Ascending aorta (tissue), 2 donors: ENCODE measurements at regions of chr3 and their contacts with region 1.

Region 1: GRCh38 chr3:190205739-190206138 is 85.0 kb upstream of the P3H2 start:
- DNase-seq: no peak
- H3K4me3 ChIP-seq: no peak overlapping the region
- H3K27ac ChIP-seq: no peak overlapping the region
- H3K4me1 ChIP-seq: no peaks in the 10 kb centered on the region
- H3K27me3 ChIP-seq: no peaks in the 10 kb centered on the region
- CTCF ChIP-seq: no peak

Region 2: DNA sequence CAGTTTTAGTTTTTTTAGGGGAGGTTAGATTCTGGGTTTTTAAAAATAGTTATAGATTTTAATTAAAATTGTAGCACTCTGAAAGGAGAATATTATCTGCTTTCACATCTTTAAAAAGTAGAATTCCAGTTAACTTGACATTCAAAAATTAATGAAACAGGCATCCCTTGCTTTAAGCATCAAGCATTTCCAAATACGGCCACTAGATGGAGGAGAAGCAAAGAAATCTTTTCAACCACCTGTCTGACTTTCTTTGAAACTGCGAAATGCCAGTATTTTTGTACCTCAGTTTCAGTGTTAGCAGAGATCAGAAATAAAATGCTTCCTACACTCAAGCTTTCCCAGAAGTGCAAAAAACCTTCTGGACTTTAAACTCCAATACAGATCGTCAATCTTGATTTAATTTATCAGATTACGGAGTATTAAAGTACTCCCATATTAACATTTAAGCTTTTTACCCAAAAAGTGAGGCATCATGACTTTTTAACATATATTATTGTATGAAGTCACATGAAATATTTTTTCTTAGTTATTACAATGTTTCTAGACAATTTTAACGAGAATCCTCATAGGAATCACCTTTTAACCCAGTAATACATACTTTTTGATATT is 238.4 kb before region 1 on chr3:
- intact Hi-C with region 1: loop called (anchors 2 kb)
- DNase-seq: no peak
- H3K4me3 ChIP-seq: no peak overlapping the region
- H3K27ac ChIP-seq: no peak overlapping the region
- H3K4me1 ChIP-seq: no peaks in the 10 kb centered on the region
- H3K27me3 ChIP-seq: no peaks in the 10 kb centered on the region
- CTCF ChIP-seq: peak; percentile 61 to 85 (median 84)

Region 3: GRCh38 chr3:190017521-190018288 is 188.0 kb before region 1 on chr3:
- intact Hi-C with region 1: loop called (anchors 5 kb)
- DNase-seq: peak in 1 of 2 donors; percentile 67
- H3K4me3 ChIP-seq: no peak overlapping the region
- H3K27ac ChIP-seq: no peak overlapping the region
- H3K4me1 ChIP-seq: peaks cover 0 to 2% of the 10 kb centered on the region in 2 donors
- H3K27me3 ChIP-seq: no peaks in the 10 kb centered on the region
- CTCF ChIP-seq: peak in 2 of 3 experiments; percentile 6 to 44